Mucosa of descending colon (tissue), 3 donors: ENCODE measurements at regions of chr2 and their contacts with region 1.

Region 1: DNA sequence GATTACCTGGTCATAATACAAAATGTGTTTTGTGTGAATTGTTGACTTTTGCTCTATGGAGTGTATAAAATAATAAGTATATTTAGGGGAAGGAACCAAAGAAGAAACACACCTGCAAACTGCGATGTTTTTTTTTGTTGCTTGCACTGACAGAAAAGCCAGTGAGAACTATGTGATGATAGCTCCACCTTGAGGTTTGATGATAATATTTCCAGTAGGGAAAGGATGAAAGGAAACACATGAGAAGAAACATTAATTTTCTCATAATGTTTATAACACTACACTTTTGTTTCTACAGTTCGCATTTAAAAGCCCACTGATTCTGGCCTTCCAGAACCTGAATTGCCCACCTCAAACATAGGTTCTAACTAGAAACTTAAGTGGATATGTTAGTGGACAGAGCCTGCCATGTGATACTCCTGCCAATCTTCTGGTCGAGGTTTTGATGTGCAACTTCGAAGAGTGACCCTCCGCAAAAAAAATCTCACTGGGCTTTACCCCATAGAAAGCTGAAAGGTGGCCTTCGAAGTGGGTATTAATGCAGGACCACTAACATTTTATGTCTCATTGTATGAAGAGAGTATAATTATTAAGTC is 476.4 kb upstream of the SPHKAP start:
- DNase-seq: no peak
- ATAC-seq: no peak
- H3K4me3 ChIP-seq: no peak overlapping the region
- H3K4me1 ChIP-seq: no peaks in the 10 kb centered on the region
- CTCF ChIP-seq: no peak

Region 2: GRCh38 chr2:228048838-228049490 is 608.9 kb before region 1 on chr2:
- intact Hi-C with region 1: loop called in 1 of 2 experiments (anchors 5 kb)
- DNase-seq: peak in 1 of 3 donors; percentile 26
- ATAC-seq: peak; percentile 83
- H3K4me3 ChIP-seq: no peak overlapping the region
- H3K4me1 ChIP-seq: no peaks in the 10 kb centered on the region
- CTCF ChIP-seq: no peak

Region 3: GRCh38 chr2:228535396-228535795 is 122.5 kb before region 1 on chr2:
- intact Hi-C with region 1: no loop called
- DNase-seq: no peak
- ATAC-seq: no peak
- H3K4me3 ChIP-seq: no peak overlapping the region
- H3K4me1 ChIP-seq: no peaks in the 10 kb centered on the region
- CTCF ChIP-seq: no peak